Mammary epithelial cell (primary cell): ENCODE measurements at regions of chr3 and their contacts with region 1.

Region 1: DNA sequence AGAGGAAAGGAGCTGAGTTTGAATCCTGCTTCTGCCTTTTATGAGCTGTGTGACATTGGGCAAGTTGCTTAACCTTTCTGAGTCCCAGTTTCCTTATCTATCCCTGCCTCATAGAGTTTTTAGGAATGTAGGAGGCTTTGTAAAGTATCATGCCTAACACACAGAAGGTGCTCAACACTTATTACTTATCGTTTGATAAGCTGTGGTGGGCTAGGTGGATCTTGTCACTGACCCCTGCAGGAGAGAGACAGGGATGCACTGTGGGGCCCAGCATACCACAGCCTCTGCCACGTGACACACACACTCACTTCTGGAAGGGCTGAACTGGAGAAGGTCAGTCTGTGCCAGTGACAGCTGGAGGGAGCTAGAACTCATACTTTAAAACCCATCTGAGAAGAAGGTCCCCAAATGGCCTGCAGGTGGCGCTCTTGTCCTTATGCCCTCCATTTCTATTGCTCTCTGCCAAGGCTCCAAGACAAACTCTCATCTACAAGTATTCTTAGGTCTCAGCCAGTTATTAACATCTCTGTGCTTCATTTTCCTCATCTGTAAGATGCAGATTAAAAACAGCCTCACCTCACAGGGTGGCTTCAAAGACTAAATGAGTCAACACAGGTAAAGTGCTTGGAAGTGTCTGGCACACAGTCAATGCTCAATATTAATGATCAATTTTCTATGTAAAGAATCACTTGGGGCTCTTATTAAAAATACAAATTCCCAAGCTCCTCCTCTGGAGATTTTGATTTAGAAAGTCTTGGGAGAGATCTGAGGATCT is 57.5 kb upstream of the HACD2 start:
- DNase-seq: peak; percentile 77
- H3K4me3 ChIP-seq: no peak overlapping the region
- H3K27ac ChIP-seq: no peak overlapping the region
- H3K4me1 ChIP-seq: peaks cover 19% of the 10 kb centered on the region
- H3K27me3 ChIP-seq: no peaks in the 10 kb centered on the region
- CTCF ChIP-seq: peak; percentile 79 to 95

Region 2: DNA sequence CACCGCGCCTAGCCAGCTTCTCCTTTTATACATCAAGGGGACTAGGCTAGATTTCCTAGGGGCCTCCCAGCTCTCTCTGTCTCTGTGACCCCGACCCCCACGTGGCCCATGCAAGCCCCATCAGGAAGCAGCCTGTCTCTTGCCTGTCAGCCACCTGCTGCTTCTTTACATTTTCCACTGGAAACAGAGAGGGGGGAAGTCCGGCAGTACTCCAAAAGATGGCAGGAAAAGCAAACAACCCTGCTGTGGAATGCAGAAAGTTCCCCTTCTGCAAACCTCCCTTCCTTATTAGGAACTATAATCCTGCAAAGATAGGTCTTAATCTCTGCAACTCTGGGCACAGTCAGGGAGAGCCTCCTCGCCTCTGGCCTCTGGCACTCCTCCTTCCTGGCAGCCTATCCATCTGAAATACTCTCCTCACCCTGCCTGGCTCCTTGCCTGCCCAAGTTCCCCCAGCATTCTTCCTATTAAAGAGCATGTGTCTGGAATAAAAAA is 10.2 kb before region 1 on chr3:
- CTCF ChIA-PET with region 1: interaction called, 10 read pairs
- dilution Hi-C with region 1: no loop called
- in situ Hi-C with region 1: no loop called
- intact Hi-C with region 1: no loop called
- DNase-seq: no peak
- H3K4me3 ChIP-seq: no peak overlapping the region
- H3K27ac ChIP-seq: no peak overlapping the region
- H3K4me1 ChIP-seq: peaks cover 33% of the 10 kb centered on the region
- H3K27me3 ChIP-seq: no peaks in the 10 kb centered on the region
- CTCF ChIP-seq: no peak

Region 3: DNA sequence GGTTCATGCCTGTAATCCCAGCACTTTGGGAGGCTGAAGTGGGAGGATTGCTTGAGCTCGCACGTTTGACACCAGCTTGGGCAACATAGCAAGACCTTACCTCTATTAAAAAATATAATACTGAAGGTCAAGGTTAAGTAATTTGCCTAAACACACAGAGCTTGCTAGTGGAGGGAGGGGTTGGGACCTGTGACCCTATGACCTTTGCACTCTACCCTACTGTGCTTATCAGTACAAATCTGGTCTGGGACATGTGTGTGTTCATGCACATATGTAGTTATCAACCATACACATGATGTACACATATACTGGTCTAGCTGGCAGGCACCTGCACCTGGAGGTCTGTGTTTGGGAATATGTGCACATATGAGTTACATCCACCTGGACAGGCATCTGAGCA is 60.4 kb after region 1 on chr3:
- CTCF ChIA-PET with region 1: no interaction called
- dilution Hi-C with region 1: no loop called
- in situ Hi-C with region 1: no loop called
- intact Hi-C with region 1: loop called (anchors 2 kb)
- DNase-seq: no peak
- H3K4me3 ChIP-seq: no peak overlapping the region
- H3K27ac ChIP-seq: no peak overlapping the region
- H3K4me1 ChIP-seq: no peaks in the 10 kb centered on the region
- H3K27me3 ChIP-seq: no peaks in the 10 kb centered on the region
- CTCF ChIP-seq: no peak